ENCODE measurements at regions of chr14 and their contacts with region 1.

Region 1: DNA sequence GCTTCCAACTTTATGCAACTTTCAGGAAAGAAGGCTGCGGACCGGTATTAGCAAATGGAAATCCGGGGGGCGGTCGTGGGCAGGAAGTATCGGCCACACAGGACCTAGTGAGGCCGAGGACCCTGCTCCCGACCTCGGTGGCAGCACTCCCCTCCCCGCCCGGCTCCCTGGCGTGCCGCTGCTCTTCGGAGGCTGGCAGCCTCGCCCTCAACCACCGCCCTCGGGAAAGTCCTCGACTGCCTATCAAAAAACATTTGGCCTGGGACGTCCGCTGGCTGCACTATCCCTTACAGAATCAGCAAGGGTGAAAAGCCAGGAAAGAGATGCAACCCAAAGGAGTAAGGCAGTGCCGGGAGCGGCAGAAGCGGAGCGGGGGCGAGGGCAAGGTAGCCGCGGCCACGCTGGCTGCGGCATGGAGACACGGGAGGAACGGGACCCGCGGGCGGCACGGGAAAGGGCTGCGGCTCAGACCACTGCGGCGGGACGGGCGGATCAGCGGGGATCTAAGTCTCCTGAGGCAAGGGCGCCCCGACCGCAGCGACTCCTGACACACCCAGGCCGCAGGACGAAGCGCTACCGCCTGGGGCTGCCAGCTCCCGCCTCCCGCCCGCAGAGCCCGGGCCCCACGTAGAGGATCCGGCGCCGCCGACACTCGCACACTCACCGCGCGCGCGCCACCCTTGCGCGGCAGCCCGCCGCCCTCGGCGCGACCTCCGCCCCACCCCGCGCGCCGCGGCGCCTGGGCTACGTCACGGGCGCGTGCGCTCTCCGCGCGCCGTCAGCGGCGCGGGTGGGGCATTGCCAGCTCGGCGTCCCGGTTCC is at the starts of genes BBOF1 and ENTPD5:
- DNase-seq: peak; percentile 92
- ATAC-seq: peak; percentile 99
- total RNA-seq, gene BBOF1: 3.0 TPM
- total RNA-seq, gene ENTPD5: 6.2 TPM

Region 2: DNA sequence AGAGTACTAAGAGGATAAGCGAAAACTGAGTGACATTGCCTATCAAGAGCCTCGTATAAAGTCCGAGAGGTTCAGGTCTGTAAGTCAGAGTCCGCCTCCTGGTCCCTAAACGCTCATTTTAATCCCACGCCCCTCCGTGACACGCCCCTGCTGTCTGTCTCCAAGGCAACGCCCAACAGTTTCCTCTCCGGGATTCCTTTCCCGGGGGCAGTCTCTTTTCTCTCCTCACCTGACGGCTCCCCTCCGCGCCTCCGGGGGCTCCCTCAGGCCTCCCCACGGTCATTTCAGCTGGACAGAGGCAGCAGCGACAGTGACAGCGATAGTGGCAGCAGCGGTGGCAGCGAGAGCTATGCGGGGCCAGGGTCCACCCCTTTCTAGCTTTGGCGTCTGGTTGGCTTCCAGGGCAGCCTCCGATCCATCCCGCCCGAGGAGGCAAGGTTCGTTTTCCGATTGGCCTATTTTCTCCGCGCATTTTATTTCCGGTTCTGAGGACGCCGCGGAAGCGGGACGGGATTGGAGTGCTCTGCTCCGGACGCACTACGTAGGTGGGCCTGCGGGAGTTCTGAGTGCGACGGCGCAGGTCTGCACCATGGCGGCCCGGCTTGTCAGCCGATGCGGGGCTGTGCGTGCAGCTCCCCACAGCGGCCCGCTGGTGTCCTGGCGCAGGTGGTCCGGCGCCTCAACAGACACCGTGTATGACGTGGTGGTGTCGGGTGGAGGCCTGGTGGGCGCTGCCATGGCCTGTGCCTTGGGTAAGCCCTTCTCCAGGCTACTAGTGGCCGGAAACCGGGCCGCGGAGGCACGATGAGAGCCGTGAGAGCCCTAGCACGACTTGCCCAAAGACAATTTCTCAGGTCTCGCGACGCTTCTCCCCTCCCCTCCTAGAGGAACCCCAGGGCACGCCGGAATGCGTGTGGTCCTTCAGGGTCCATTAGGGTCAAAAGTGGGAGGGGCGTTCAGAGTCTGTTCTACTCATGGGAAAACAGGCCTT is 68.8 kb before region 1 on chr14 and contains the starts of genes COQ6 and FAM161B:
- intact Hi-C with region 1: loop called (anchors 2 kb)
- DNase-seq: peak; percentile 95
- ATAC-seq: peak; percentile 99
- total RNA-seq, gene COQ6: 47.2 TPM
- total RNA-seq, gene FAM161B: 3.7 TPM

Region 3: DNA sequence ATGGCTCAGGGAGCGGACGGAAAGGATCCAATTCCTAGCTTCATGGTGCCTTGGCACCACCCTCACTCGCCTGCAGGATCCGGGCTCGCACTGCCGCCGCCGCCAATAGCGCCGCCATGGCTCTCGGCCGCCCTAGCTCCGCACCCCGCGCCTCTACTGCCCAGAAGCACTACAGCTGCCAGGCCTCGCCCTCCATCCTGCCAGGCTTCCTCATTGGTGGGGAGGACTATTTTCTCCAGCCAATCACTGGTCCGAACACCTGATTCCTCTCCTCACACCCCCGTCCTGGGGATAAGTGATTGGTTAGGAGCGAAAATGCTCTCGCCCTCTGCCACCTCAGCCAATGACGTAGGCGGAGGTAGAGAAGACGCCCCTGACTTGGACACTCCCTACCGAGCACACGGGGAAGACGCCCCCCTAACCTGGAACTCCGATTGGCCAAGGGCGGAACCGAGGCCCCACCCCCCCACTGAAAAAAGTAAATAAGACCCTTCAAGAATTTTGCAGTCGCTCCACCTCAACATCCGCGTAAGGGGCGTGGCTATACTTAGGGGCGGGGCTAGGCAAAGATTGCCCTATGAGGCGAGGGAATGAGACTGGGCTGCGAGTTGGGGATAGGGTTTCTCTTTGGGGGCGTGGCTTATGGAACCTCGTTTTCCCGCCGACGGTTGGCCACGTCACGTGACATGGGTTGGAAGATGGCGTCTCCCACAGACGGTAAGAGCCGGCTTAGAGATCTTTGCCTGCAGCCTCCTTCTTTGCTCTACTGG is 65.7 kb after region 1 on chr14 and contains the starts of genes ALDH6A1 and LIN52:
- intact Hi-C with region 1: loop called (anchors 1 kb)
- DNase-seq: peak; percentile 98
- ATAC-seq: peak; percentile 98
- total RNA-seq, gene ALDH6A1: 47.2 TPM
- total RNA-seq, gene LIN52: 6.7 TPM

Measured in Right ventricle myocardium inferior (tissue), 1 donor.